HEK293T (cell line): ENCODE measurements at regions of chr6 and their contacts with region 1.

Region 1: GRCh38 chr6:39910744-39911143 is 23.5 kb downstream of the MOCS1 start:
- DNase-seq: no peak

Region 2: GRCh38 chr6:39350723-39351505 is 559.8 kb before region 1 on chr6:
- CTCF ChIA-PET with region 1: interaction called, 11 read pairs
- POLR2A ChIA-PET with region 1: no interaction called
- DNase-seq: no peak

Region 3: DNA sequence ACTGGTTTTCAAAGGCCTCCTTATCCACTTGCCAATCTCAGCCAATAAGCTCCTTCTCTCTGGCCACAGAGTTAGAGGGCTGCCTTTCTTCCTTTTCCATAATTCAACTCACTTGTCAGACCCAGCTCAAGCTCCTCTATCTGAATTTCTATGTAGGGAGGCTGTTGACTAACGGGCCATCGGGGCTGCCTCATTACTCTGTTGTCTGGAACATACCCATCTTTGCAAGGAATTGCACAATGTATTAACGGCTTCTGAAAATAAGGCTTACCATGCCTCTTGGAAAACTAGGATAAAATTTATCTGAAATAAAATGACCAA is 157.1 kb before region 1 on chr6:
- CTCF ChIA-PET with region 1: no interaction called
- POLR2A ChIA-PET with region 1: no interaction called
- DNase-seq: no peak

Region 4: DNA sequence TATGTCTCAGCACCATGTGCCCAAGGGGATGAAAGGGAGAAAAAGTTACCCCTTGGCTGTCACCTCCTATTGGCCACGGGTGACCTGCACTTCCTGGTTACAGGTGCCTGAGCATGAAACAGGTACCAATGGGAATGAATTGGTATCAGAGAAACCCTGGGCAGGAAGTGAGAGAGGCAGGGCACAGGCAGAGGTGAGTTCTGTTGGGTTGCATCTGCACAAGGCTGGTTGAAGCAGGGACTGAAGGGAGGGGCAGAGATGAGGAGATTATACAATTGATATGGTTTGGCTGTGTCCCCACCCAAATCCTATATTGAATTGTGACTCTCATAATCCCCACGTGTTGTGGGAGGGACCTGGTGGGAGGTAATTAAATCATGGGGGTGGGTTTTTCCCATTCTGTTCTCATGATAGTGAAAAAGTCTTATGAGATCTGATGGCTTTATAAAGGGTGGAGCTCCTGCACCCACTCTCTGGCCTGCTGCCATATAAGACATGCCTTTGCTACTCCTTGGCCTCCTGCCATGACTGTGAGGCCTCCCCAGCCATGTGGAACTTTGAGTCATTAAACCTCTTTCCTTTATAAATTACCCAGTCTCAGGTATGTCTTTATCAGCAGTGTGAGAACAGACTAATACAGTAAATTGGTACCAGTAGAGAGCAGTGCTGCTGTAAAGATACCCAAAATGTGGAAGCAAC is 384.7 kb after region 1 on chr6:
- CTCF ChIA-PET with region 1: no interaction called
- POLR2A ChIA-PET with region 1: no interaction called
- DNase-seq: no peak